Activated CD8-positive, alpha-beta T cell treated with anti-CD3 and anti-CD28 coated beads for 36 hours (primary cell): ENCODE measurements at regions of chr7 and their contacts with region 1.

Region 1: GRCh38 chr7:30564243-30564892 is 30.3 kb upstream of the GARS1 start:
- DNase-seq: peak; percentile 82
- ATAC-seq: peak; percentile 96
- H3K4me3 Mint-ChIP-seq: no peak overlapping the region
- H3K27ac Mint-ChIP-seq: no peak overlapping the region
- H3K4me1 Mint-ChIP-seq: peaks cover 2% of the 10 kb centered on the region
- H3K27me3 Mint-ChIP-seq: no peaks in the 10 kb centered on the region
- CTCF ChIP-seq: peak; percentile 90

Region 2: GRCh38 chr7:30389791-30390190 is 174.6 kb before region 1 on chr7:
- CTCF ChIA-PET with region 1: no interaction called
- POLR2A ChIA-PET with region 1: no interaction called
- intact Hi-C with region 1: no loop called
- DNase-seq: no peak
- ATAC-seq: no peak
- H3K4me3 Mint-ChIP-seq: no peak overlapping the region
- H3K27ac Mint-ChIP-seq: no peak overlapping the region
- H3K4me1 Mint-ChIP-seq: no peaks in the 10 kb centered on the region
- H3K27me3 Mint-ChIP-seq: no peaks in the 10 kb centered on the region
- CTCF ChIP-seq: no peak

Region 3: GRCh38 chr7:30504347-30505173 is 59.8 kb before region 1 on chr7 and contains the start of gene GGCT:
- CTCF ChIA-PET with region 1: interaction called, 31 read pairs
- POLR2A ChIA-PET with region 1: interaction called, 3 read pairs
- intact Hi-C with region 1: no loop called
- DNase-seq: peak; percentile 99
- ATAC-seq: peak; percentile 99
- H3K4me3 Mint-ChIP-seq: peak within 1 kb of the TSS; percentile 80
- H3K27ac Mint-ChIP-seq: peak within 1 kb of the TSS; percentile 89
- H3K4me1 Mint-ChIP-seq: peaks cover 46% of the 10 kb centered on the region
- H3K27me3 Mint-ChIP-seq: no peaks in the 10 kb centered on the region
- CTCF ChIP-seq: no peak
- total RNA-seq, gene GGCT: 78.6 to 78.7 TPM

Region 4: DNA sequence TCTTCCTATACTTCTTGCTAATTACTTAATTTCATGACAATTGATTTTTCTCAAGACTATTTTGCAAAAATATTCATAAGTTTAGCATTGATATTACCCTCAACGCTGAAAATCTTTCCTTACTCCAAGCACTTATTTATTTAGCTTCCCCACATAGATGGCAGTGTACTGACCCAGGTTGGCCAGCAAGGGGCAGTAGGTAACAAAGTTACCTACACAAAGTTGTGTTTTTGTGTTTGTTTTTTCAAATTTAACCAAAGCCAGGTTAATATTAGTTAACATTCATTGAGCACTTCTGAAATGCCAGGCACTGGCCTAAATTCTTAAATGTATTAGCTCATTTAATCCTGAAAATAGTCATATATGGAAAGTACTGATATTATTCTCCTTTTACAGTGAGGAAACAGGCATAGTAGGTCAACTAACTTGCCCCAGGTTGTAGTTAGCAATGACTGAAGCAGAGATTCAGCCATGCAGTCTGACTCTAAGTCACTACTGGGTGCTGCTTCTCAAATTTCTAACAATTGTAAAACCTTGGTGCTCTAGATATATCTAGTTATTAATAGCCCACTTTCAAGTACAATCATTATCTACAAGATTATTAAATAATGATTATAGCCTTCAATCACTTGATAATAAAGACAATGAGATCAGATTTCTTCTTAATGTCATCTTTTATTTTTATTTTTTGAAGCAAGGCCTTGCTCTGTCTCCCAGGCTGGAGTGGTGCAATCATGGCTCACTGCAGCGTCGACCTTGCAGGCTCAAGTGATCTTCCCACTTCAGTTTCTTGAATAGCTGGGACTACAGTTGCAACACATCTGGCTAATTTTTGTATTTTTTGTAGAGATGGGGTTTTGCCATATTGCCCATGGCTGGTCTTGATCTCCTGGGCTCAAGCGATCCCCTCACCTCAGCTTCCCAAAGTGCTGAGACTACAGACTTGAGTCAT is 54.0 kb before region 1 on chr7:
- CTCF ChIA-PET with region 1: interaction called, 31 read pairs
- POLR2A ChIA-PET with region 1: interaction called, 3 read pairs
- intact Hi-C with region 1: no loop called
- DNase-seq: peak; percentile 36
- ATAC-seq: peak; percentile 77
- H3K4me3 Mint-ChIP-seq: no peak overlapping the region
- H3K27ac Mint-ChIP-seq: no peak overlapping the region
- H3K4me1 Mint-ChIP-seq: peaks cover 6% of the 10 kb centered on the region
- H3K27me3 Mint-ChIP-seq: no peaks in the 10 kb centered on the region
- CTCF ChIP-seq: peak; percentile 91

Region 5: DNA sequence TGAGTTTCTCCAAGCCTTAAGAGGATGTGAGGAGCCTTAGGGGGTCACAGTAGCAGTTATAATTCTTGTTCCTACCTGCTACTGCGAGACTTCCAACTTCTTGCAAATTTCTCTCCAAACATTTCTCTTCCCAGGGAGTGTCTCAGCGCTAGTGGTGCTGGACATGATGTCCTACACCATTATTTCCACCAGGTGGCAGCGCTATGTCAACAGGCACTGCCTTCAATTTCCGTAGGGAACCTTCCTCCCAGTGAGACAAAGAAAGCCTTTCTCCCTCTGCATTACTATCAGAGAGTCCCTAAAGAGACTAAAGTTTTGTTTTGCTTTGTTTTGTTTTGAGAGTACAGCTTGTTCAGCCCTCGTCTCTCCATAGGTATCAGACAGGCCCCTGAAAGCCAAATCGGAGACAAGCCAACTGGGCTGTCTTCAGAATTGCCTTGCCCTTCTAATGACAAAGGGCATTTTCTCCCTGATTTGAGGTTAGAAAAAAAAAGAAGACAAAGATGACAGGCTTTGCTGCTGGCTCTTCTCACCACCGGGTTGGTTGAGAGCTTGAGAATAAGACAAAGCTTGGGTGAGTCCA is 15.5 kb before region 1 on chr7:
- CTCF ChIA-PET with region 1: interaction called, 70 read pairs
- POLR2A ChIA-PET with region 1: interaction called, 3 read pairs
- intact Hi-C with region 1: no loop called
- DNase-seq: peak; percentile 50
- ATAC-seq: peak; percentile 73
- H3K4me3 Mint-ChIP-seq: no peak overlapping the region
- H3K27ac Mint-ChIP-seq: no peak overlapping the region
- H3K4me1 Mint-ChIP-seq: no peaks in the 10 kb centered on the region
- H3K27me3 Mint-ChIP-seq: no peaks in the 10 kb centered on the region
- CTCF ChIP-seq: peak; percentile 85

Region 6: GRCh38 chr7:30671793-30672465 is 107.6 kb after region 1 on chr7:
- CTCF ChIA-PET with region 1: no interaction called
- POLR2A ChIA-PET with region 1: no interaction called
- intact Hi-C with region 1: no loop called
- DNase-seq: peak; percentile 47
- ATAC-seq: no peak
- H3K4me3 Mint-ChIP-seq: no peak overlapping the region
- H3K27ac Mint-ChIP-seq: no peak overlapping the region
- H3K4me1 Mint-ChIP-seq: no peaks in the 10 kb centered on the region
- H3K27me3 Mint-ChIP-seq: peaks cover 9% of the 10 kb centered on the region
- CTCF ChIP-seq: no peak